H1 (cell line): ENCODE measurements at regions of chr18 and their contacts with region 1.

Region 1: GRCh38 chr18:46518438-46518837 is 138.6 kb downstream of the LOXHD1 start:
- DNase-seq: no peak
- H3K4me3 ChIP-seq: no peak overlapping the region
- H3K27ac ChIP-seq: no peak overlapping the region
- H3K4me1 ChIP-seq: no peaks in the 10 kb centered on the region
- H3K27me3 ChIP-seq: no peaks in the 10 kb centered on the region; a peak in 2 of 7 replicates
- CTCF ChIP-seq: peak; percentile 26 to 63 (median 47)
- EP300 ChIP-seq: no peak
- POLR2A ChIP-seq: no peak
- RAD21 ChIP-seq: peak; percentile 52 to 73

Region 2: GRCh38 chr18:46097801-46098615 is 420.4 kb before region 1 on chr18 and contains the start of gene ATP5F1A:
- CTCF ChIA-PET with region 1: no interaction called
- POLR2A ChIA-PET with region 1: no interaction called
- DNase-seq: peak in 1 of 2 experiments; percentile 88
- H3K4me3 ChIP-seq: peak within 1 kb of the TSS; percentile 91 to 99 (median 98)
- H3K27ac ChIP-seq: peak within 1 kb of the TSS; percentile 92
- H3K4me1 ChIP-seq: peaks cover 0 to 3% (median 2%) of the 10 kb centered on the region in 4 experiments; a peak in 6 of 7 replicates
- H3K27me3 ChIP-seq: no peaks in the 10 kb centered on the region
- CTCF ChIP-seq: no peak
- EP300 ChIP-seq: no peak
- POLR2A ChIP-seq: peak; percentile 81 to 91
- RAD21 ChIP-seq: no peak; a peak in 1 of 4 replicates
- total RNA-seq, gene ATP5F1A: 669 and 685 TPM in 2 replicates

Region 3: DNA sequence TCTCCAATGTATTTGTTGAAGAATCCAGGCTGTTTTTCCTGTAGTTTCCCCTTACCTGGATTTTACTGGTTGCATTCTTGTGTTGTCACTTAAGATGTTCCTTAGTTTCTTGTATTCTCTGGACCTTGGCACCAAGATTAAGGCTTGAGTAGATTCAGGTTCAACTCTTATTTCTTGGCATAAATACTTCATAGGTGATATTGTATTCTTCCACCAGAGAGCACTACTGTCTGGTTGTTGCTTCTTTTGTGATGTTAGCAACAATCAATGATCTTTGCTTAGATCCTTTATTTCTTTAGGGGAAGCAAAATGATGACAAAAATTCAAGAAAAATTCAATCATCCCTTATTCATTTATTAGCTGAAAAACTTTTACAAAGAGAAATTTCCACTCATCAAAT is 72.5 kb before region 1 on chr18:
- CTCF ChIA-PET with region 1: interaction called, 10 read pairs
- POLR2A ChIA-PET with region 1: no interaction called
- DNase-seq: no peak
- H3K4me3 ChIP-seq: no peak overlapping the region
- H3K27ac ChIP-seq: no peak overlapping the region
- H3K4me1 ChIP-seq: peaks cover 5 to 11% (median 7%) of the 10 kb centered on the region in 4 experiments
- H3K27me3 ChIP-seq: no peaks in the 10 kb centered on the region
- CTCF ChIP-seq: no peak
- EP300 ChIP-seq: no peak
- POLR2A ChIP-seq: no peak
- RAD21 ChIP-seq: peak in 1 of 2 experiments; percentile 28; a peak in 1 of 4 replicates

Region 4: GRCh38 chr18:46536215-46536874 is 17.9 kb after region 1 on chr18:
- CTCF ChIA-PET with region 1: interaction called, 12 read pairs
- POLR2A ChIA-PET with region 1: no interaction called
- DNase-seq: no peak
- H3K4me3 ChIP-seq: no peak overlapping the region
- H3K27ac ChIP-seq: no peak overlapping the region
- H3K4me1 ChIP-seq: no peaks in the 10 kb centered on the region
- H3K27me3 ChIP-seq: no peaks in the 10 kb centered on the region
- CTCF ChIP-seq: no peak
- EP300 ChIP-seq: no peak
- POLR2A ChIP-seq: no peak
- RAD21 ChIP-seq: no peak

Region 5: DNA sequence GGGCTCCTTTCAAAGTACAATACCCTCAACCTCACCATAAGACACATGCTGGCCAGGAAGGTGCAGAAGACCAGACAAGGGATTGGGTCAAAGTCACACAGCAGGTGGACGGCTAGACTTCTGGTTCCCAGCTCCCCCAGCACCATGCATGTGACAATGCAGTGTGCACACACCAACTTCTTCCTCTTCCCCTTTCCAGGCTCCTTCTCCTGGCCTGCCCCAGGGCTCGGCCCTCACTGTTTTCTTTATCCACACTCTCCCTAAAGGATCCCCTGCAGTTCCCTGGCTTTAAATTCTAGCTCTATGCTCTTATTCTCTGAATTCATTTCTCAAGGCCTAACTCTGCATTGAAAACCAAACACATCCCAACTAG is 56.3 kb after region 1 on chr18:
- CTCF ChIA-PET with region 1: no interaction called
- POLR2A ChIA-PET with region 1: no interaction called
- DNase-seq: peak in 1 of 2 experiments; percentile 31
- H3K4me3 ChIP-seq: no peak overlapping the region
- H3K27ac ChIP-seq: no peak overlapping the region
- H3K4me1 ChIP-seq: no peaks in the 10 kb centered on the region
- H3K27me3 ChIP-seq: no peaks in the 10 kb centered on the region
- CTCF ChIP-seq: no peak
- EP300 ChIP-seq: no peak
- POLR2A ChIP-seq: no peak
- RAD21 ChIP-seq: no peak

Region 6: GRCh38 chr18:46649071-46649862 is 130.8 kb after region 1 on chr18:
- CTCF ChIA-PET with region 1: interaction called, 10 read pairs
- POLR2A ChIA-PET with region 1: no interaction called
- DNase-seq: no peak
- H3K4me3 ChIP-seq: no peak overlapping the region
- H3K27ac ChIP-seq: no peak overlapping the region
- H3K4me1 ChIP-seq: no peaks in the 10 kb centered on the region; a peak in 1 of 7 replicates
- H3K27me3 ChIP-seq: no peaks in the 10 kb centered on the region
- CTCF ChIP-seq: no peak
- EP300 ChIP-seq: no peak
- POLR2A ChIP-seq: no peak
- RAD21 ChIP-seq: no peak